OCI-LY7 (cell line): ENCODE measurements at regions of chr19 and their contacts with region 1.

Region 1: GRCh38 chr19:34201133-34201532 is 28.8 kb downstream of the LSM14A start:
- DNase-seq: no peak
- H3K4me3 ChIP-seq: no peak overlapping the region
- H3K27ac ChIP-seq: no peak overlapping the region
- H3K4me1 ChIP-seq: no peaks in the 10 kb centered on the region
- CTCF ChIP-seq: no peak

Region 2: DNA sequence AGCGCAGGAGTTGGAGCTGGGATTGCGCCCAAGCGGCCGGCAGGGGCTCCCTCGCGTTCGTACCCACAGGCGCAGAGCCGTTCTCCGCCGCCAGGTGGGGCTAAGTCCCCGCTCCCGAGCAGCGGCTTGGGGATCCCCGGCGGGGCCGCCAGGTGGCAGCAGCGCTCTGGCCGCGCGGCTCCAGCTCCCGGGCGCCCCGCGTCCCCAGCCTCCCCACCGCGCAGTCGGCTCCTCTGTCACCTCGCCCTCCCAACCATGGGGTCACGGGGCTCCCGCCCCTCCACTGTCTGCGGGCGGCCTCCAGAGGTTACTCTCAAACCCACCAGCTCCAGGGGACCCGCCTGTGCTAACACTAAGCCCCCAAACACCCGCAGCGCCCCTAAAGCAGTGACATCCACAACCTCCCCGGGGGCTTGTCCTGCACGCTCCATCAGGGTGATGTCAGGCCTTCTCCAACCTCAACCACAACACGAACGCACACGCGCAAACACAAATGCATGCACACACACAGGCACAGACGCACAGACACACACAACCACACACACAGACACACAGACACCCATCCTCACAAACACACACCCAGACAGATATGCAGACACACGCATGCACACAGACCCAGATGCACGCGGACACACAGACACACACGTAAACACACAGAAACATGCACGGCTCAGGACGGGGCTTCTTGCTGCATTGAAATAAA is 422.9 kb before region 1 on chr19:
- CTCF ChIA-PET with region 1: no interaction called
- POLR2A ChIA-PET with region 1: no interaction called
- intact Hi-C with region 1: no loop called
- DNase-seq: peak; percentile 82
- H3K4me3 ChIP-seq: no peak overlapping the region
- H3K27ac ChIP-seq: no peak overlapping the region
- H3K4me1 ChIP-seq: no peaks in the 10 kb centered on the region
- CTCF ChIP-seq: peak; percentile 99

Region 3: GRCh38 chr19:34034318-34034846 is 166.8 kb before region 1 on chr19:
- CTCF ChIA-PET with region 1: no interaction called
- POLR2A ChIA-PET with region 1: no interaction called
- intact Hi-C with region 1: no loop called
- DNase-seq: no peak
- H3K4me3 ChIP-seq: no peak overlapping the region
- H3K27ac ChIP-seq: no peak overlapping the region
- H3K4me1 ChIP-seq: no peaks in the 10 kb centered on the region
- CTCF ChIP-seq: no peak

Region 4: GRCh38 chr19:34484328-34484727 is 283.2 kb after region 1 on chr19:
- CTCF ChIA-PET with region 1: no interaction called
- POLR2A ChIA-PET with region 1: no interaction called
- intact Hi-C with region 1: no loop called
- DNase-seq: no peak
- H3K4me3 ChIP-seq: no peak overlapping the region
- H3K27ac ChIP-seq: no peak overlapping the region
- H3K4me1 ChIP-seq: no peaks in the 10 kb centered on the region
- CTCF ChIP-seq: no peak

Region 5: DNA sequence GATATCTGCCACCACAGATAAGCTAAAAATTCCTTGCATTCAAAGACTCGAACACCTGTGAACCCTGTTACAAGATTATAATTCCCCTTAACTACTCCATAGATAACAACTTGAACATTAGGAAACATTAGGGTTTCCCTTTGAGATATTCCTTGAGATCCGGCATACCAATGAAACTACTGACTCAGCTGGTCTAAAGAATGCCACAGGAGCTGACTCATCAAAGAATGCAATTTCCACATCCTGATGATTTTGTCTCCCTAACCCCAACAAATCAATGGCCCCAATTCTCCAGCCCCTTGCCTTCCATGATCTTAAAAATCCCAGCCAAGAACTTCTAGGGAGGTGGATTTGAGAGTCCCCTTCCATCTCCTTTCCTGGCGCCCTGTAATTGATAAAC is 607.4 kb after region 1 on chr19:
- CTCF ChIA-PET with region 1: no interaction called
- POLR2A ChIA-PET with region 1: interaction called, 10 read pairs
- intact Hi-C with region 1: no loop called
- DNase-seq: no peak
- H3K4me3 ChIP-seq: no peak overlapping the region
- H3K27ac ChIP-seq: no peak overlapping the region
- H3K4me1 ChIP-seq: peaks cover 15% of the 10 kb centered on the region
- CTCF ChIP-seq: no peak